ENCODE measurements at regions of chr15 and their contacts with region 1.

Region 1: GRCh38 chr15:68053701-68054627 is at the start of gene PIAS1:
- DNase-seq: peak; percentile 97
- H3K4me3 ChIP-seq: peak within 1 kb of the TSS; percentile 98 to 100 (median 99)
- H3K27ac ChIP-seq: peak within 1 kb of the TSS; percentile 97 to 99 (median 98)
- H3K4me1 ChIP-seq: peaks cover 0 to 39% (median 33%) of the 10 kb centered on the region in 4 donors
- H3K27me3 ChIP-seq: no peaks in the 10 kb centered on the region
- CTCF ChIP-seq: no peak
- EP300 ChIP-seq: no peak
- POLR2A ChIP-seq: peak; percentile 89 to 91
- total RNA-seq, gene PIAS1: 55.9 to 75.4 (median 66.9) TPM

Region 2: DNA sequence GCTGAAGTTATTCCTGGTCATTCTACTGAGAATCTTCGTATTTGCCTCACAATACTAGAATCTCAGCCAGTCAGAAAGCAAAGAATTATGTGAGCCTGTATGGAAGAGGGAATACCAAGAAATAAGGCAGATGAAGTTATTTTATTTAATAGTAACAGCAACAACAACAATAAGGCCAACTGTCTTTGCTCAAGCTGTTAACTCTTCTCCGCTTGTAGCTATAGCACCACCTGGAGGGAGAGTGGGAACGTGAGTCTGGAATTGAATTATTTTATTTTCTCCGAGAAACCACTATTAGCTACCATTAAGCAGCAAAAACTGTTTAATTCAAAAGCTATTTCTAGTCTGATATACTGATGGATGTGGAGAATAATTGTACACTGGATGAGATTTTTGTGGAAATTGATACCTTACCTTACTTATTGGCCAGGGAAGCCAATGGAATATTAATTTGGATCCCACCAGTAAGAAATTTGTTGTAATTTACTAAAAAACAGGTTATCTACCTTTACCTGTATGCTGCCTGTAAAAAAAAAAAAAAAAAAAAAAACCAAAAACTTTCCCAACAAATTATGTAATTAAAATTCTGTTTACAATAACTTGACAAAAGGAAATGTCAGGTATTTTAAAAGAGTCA is 101.1 kb after region 1 on chr15:
- intact Hi-C with region 1: loop called (anchors 2 kb)
- DNase-seq: no peak
- H3K4me3 ChIP-seq: no peak overlapping the region
- H3K27ac ChIP-seq: peak overlapping the region in 3 of 4 donors; percentile 8 to 81 (median 25)
- H3K4me1 ChIP-seq: peaks cover 0 to 63% (median 42%) of the 10 kb centered on the region in 4 donors
- H3K27me3 ChIP-seq: no peaks in the 10 kb centered on the region
- CTCF ChIP-seq: peak; percentile 61 to 76 (median 73)
- EP300 ChIP-seq: no peak
- POLR2A ChIP-seq: no peak

Region 3: DNA sequence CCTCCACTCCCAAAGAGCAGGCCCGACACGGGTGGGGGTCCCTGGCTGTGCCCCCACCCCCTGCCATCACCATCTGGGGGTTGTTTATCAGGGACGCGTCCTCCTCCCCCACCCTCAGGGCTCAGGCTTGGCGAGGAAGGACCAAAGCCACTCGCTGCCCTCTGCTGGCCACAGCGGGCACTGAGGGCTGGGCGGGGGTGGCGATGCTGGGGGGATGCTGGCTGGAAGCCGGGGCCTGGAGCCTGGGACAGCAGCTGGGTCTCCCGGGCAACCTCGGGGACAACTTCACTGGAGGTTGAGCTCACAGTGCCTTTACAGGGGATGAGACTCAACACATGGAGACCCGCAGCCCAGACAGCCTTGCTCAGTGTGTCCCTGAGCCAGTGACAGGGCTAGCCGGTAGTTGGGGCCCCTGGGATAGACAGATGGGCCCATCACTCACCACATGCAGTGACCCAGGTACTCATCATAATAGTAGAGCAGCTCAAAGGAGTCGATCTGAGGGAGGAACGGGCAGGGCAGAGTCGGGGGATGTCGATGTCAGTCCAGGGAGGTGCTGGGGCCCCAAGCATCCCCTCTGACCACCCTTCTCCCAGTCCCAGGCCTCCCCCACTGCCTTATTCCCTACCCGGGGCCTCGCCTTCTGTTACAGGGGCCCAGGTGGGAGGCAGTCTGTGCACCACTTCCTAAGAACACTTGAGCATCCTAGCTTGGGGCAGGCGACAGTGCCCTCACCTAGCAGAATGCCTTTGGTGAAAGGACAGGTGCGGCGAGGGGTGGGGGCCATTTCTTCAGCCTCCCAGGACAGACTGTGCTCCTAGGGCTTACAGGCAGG is 157.1 kb after region 1 on chr15:
- intact Hi-C with region 1: loop called (anchors 10 kb)
- DNase-seq: peak; percentile 87
- H3K4me3 ChIP-seq: peak overlapping the region in 3 of 4 donors; percentile 27 to 37 (median 35)
- H3K27ac ChIP-seq: peak overlapping the region in 3 of 4 donors; percentile 32 to 60 (median 54)
- H3K4me1 ChIP-seq: peaks cover 0 to 20% (median 18%) of the 10 kb centered on the region in 4 donors
- H3K27me3 ChIP-seq: no peaks in the 10 kb centered on the region
- CTCF ChIP-seq: peak; percentile 93 to 97 (median 94)
- EP300 ChIP-seq: no peak
- POLR2A ChIP-seq: no peak